Activated CD4-positive, alpha-beta memory T cell treated with anti-CD3 and anti-CD28 coated beads for 36 hours (primary cell): ENCODE measurements at regions of chr3 and their contacts with region 1.

Region 1: GRCh38 chr3:133384331-133385027 is 15.4 kb upstream of the BFSP2 start:
- DNase-seq: peak; percentile 51
- H3K4me3 Mint-ChIP-seq: no peak overlapping the region
- H3K27ac Mint-ChIP-seq: no peak overlapping the region
- H3K4me1 Mint-ChIP-seq: no peaks in the 10 kb centered on the region
- H3K27me3 Mint-ChIP-seq: no peaks in the 10 kb centered on the region

Region 2: DNA sequence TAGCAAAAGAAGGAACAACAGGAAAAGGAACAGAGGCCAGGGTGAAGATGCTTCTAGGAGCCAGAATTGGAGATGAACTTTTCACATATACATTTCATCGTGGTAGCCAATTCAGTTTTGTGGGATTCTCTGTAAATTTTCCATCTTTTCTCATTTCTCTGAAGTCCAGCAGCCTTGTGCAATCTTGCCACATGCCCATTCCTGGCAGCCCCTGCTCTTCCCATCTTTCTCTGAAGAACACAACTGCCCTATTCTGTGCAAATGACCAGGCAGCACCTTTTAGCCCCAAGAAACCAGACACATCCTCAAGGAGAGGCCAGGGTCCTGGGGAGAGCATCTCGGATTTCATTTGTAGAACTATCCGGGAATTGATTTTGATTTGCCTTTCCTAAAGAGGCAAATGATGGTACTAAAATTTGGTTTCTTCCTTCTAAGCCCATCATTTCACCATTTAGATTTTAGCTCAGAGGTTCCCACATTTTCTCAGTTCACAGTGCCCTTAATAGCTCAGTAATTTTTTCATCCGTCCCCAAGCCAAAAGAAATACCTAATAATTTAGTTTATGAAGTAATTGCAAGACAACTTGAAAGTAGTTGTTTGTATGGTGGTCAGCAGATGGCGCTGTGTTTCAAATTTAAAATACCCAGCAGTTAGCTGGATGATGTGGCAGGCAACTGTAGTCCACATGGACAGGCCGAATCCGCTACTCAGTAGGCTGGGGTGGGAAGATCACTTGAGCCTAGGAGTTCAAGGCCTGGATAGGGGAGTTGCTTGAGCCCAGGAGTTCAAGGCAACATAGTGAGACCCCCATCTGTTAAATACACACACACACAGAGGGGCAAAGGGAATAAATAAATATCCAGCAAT is 848.7 kb before region 1 on chr3:
- CTCF ChIA-PET with region 1: no interaction called
- POLR2A ChIA-PET with region 1: no interaction called
- intact Hi-C with region 1: no loop called
- DNase-seq: peak; percentile 53
- H3K4me3 Mint-ChIP-seq: no peak overlapping the region
- H3K27ac Mint-ChIP-seq: no peak overlapping the region
- H3K4me1 Mint-ChIP-seq: peaks cover 2% of the 10 kb centered on the region
- H3K27me3 Mint-ChIP-seq: no peaks in the 10 kb centered on the region

Region 3: DNA sequence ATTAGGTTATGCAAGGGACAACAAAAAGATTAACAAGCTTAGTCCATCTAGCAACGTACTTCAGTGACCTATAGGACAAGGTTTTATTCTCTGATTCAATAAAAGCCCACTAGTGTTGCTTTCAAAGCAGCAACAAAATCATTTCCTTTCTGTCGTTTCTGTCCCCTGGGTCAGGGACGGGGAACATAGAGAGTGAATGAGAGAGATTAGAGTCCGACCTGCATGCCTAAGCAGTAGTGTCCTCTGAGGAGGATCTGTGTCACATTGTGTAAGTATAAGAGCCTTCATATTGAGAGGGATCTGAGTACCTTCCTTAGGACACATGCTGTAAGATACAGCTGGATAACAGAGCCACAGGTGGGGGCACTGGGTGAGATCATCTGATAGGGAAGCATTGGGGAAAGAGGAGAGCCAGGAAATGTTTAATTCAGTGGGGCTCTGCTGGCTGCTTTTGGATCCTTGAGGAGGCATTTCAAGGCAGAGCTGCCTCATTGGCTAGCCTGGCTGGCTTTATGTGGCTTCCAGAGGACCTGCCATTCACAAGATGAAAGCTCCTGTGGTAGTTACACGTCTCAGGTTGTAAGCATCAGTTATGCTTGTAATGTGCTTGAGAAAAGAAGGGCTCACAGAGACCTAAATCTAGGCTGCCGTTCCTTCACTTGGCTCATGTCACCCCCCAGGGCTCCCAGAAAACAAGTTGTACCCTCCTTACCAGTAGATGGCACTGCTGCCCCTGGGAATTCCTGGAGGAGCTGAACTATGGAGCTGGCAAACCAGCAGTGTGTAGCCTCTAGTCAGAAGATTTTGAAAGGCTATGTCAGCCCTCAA is 343.6 kb before region 1 on chr3:
- CTCF ChIA-PET with region 1: no interaction called
- POLR2A ChIA-PET with region 1: no interaction called
- intact Hi-C with region 1: loop called (anchors 1 kb)
- DNase-seq: peak; percentile 58
- H3K4me3 Mint-ChIP-seq: no peak overlapping the region
- H3K27ac Mint-ChIP-seq: no peak overlapping the region
- H3K4me1 Mint-ChIP-seq: peaks cover 5% of the 10 kb centered on the region
- H3K27me3 Mint-ChIP-seq: peaks cover 37% of the 10 kb centered on the region

Region 4: GRCh38 chr3:133457465-133458067 is 73.1 kb after region 1 on chr3:
- CTCF ChIA-PET with region 1: no interaction called
- POLR2A ChIA-PET with region 1: no interaction called
- intact Hi-C with region 1: no loop called
- DNase-seq: no peak
- H3K4me3 Mint-ChIP-seq: no peak overlapping the region
- H3K27ac Mint-ChIP-seq: no peak overlapping the region
- H3K4me1 Mint-ChIP-seq: peaks cover 13% of the 10 kb centered on the region
- H3K27me3 Mint-ChIP-seq: no peaks in the 10 kb centered on the region